CD4-positive, alpha-beta T cell (primary cell): ENCODE measurements at regions of chr20 and their contacts with region 1.

Region 1: DNA sequence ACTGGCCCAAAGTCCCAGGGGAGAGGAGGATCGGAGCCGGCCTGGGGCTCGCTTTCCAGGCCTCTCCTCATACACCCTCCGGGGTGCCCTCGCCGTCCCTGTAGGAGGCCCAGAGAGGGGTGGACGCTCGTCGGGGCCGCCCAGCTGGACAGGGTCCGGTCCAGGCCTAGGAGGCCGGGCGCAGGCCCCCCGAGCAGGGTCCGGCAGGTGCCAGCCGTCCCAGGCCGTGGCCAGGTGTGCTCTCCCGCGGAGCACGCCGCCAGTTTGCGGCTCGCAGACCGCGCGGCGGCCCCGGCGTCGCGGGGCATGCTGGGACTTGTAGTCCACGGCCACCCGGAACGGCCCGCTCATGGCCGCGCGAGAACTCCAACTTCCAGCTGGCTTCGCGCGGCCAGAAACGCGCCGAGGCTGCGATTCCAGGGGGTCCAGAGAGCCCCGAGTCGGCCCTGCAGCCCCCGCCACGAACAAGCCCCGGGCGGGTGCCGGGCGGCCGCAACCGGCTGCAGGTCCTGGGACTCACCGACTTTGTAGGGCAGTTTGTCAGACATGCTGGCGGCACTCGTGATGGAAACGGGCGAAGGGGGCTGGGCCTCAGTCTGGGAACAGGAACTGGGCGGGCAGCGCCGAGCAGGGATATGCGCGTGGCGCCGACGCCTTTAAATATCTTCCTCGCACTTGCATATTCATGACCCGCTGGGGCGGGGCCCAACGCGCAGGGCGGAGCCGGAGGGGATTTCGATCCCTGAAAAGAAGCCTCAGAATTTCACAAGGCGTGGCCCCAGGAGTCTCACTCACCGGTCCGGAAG is at the start of gene AHCY:
- DNase-seq: peak; percentile 78 to 96 (median 87)
- ATAC-seq: peak; percentile 94
- H3K4me3 ChIP-seq: peak within 1 kb of the TSS; percentile 82
- H3K4me3 Mint-ChIP-seq: peak within 1 kb of the TSS; percentile 98
- H3K27ac ChIP-seq: peak within 1 kb of the TSS; percentile 65 to 84
- H3K27ac Mint-ChIP-seq: peak within 1 kb of the TSS; percentile 91
- H3K4me1 ChIP-seq: peaks cover 17% of the 10 kb centered on the region
- H3K4me1 Mint-ChIP-seq: peaks cover 11% of the 10 kb centered on the region
- H3K27me3 ChIP-seq: no peaks in the 10 kb centered on the region
- H3K27me3 Mint-ChIP-seq: no peaks in the 10 kb centered on the region
- CTCF ChIP-seq: no peak
- total RNA-seq, gene AHCY: 16.7 to 16.9 TPM

Region 2: DNA sequence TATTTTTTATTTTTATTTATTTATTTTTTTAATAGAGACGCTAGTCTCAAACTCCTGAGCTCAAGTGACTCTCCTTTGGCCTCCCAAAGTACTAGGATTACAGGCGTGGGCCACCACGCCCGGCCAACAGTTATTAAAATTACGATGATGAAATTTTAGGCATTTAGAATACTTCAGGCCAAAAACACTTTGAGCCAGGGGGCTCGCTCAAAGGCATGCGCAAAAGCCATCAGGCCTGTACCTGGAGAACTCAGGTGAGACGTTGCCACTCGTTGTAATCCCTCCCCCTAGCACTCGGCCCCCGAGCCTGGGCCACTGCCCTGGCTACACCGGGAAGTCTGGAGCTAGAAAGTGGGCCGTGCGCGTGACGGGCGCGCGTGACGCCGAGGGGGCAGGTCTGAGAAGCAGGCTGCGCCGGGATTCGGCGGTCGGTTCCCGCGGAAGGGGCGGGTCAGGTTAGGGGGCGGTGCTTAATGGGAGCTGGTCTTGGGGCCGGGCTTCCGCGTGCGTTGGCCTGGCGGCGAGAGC is 813.4 kb before region 1 on chr20:
- CTCF ChIA-PET with region 1: no interaction called
- POLR2A ChIA-PET with region 1: no interaction called
- intact Hi-C with region 1: loop called in 1 of 2 experiments (anchors 10 kb)
- DNase-seq: peak; percentile 97 to 100 (median 99)
- ATAC-seq: peak; percentile 96
- H3K4me3 ChIP-seq: peak overlapping the region; percentile 57
- H3K4me3 Mint-ChIP-seq: peak overlapping the region; percentile 94
- H3K27ac ChIP-seq: peak overlapping the region; percentile 92 to 95
- H3K27ac Mint-ChIP-seq: peak overlapping the region; percentile 96
- H3K4me1 ChIP-seq: peaks cover 26% of the 10 kb centered on the region
- H3K4me1 Mint-ChIP-seq: peaks cover 36% of the 10 kb centered on the region
- H3K27me3 ChIP-seq: no peaks in the 10 kb centered on the region
- H3K27me3 Mint-ChIP-seq: no peaks in the 10 kb centered on the region
- CTCF ChIP-seq: no peak

Region 3: GRCh38 chr20:34285450-34285849 is 17.5 kb before region 1 on chr20:
- CTCF ChIA-PET with region 1: no interaction called
- POLR2A ChIA-PET with region 1: no interaction called
- intact Hi-C with region 1: no loop called
- DNase-seq: no peak
- ATAC-seq: no peak
- H3K4me3 ChIP-seq: no peak overlapping the region
- H3K4me3 Mint-ChIP-seq: no peak overlapping the region
- H3K27ac ChIP-seq: no peak overlapping the region
- H3K27ac Mint-ChIP-seq: no peak overlapping the region
- H3K4me1 ChIP-seq: no peaks in the 10 kb centered on the region
- H3K4me1 Mint-ChIP-seq: no peaks in the 10 kb centered on the region
- H3K27me3 ChIP-seq: no peaks in the 10 kb centered on the region
- H3K27me3 Mint-ChIP-seq: no peaks in the 10 kb centered on the region
- CTCF ChIP-seq: no peak

Region 4: GRCh38 chr20:34324541-34324940 is 21.6 kb after region 1 on chr20:
- CTCF ChIA-PET with region 1: no interaction called
- POLR2A ChIA-PET with region 1: no interaction called
- intact Hi-C with region 1: no loop called
- DNase-seq: peak in 1 of 14 experiments; percentile 7
- ATAC-seq: no peak
- H3K4me3 ChIP-seq: no peak overlapping the region
- H3K4me3 Mint-ChIP-seq: no peak overlapping the region
- H3K27ac ChIP-seq: no peak overlapping the region
- H3K27ac Mint-ChIP-seq: no peak overlapping the region
- H3K4me1 ChIP-seq: no peaks in the 10 kb centered on the region
- H3K4me1 Mint-ChIP-seq: no peaks in the 10 kb centered on the region
- H3K27me3 ChIP-seq: no peaks in the 10 kb centered on the region
- H3K27me3 Mint-ChIP-seq: peaks cover 15% of the 10 kb centered on the region
- CTCF ChIP-seq: no peak

Region 5: DNA sequence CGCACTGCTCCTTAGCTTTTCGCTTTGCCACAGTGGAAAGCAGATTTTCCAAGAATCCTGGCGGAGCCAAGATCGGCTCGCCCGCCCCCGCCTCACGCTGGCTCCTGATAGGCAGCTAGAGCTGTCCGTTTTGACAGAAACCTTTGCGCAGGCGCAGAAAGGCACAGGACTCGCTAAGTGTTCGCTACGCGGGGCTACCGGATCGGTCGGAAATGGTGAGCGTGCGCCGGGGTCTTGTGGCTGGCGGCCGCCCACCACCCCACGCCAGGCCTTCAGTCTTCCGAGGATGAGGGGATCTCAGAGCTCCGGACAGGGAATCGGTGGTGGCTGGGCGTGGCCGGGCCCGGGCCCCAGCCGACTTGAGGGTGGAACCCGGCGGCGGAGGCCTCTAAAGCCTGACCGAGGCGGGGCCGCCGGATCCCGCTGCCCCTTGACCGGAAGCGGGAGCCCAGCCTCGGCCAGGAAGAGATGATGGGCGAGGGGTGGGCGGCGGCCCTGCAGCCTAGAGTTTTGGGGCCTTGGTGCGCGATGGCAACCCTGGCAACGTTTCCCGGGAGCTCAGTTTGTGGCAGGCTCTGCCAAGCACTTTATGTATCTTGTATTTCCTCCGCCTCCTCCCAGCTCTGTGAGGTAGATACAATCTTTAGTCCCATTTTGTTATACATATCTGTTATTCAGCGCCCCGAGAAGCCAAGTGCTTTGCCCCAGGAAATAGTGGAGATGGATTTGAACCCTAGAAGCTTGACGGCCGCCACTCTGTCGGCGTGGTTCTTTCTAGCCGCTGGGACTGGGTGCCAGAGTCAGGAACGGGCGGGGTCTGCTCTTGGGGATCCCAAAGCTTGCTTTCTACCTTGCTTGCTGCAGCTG is 213.6 kb after region 1 on chr20 and contains the start of gene DYNLRB1:
- CTCF ChIA-PET with region 1: no interaction called
- POLR2A ChIA-PET with region 1: interaction called, 30 read pairs
- intact Hi-C with region 1: loop called in 1 of 2 experiments (anchors 1 kb)
- DNase-seq: peak; percentile 88 to 96 (median 94)
- ATAC-seq: peak; percentile 74
- H3K4me3 ChIP-seq: peak within 1 kb of the TSS; percentile 82
- H3K4me3 Mint-ChIP-seq: peak within 1 kb of the TSS; percentile 99
- H3K27ac ChIP-seq: peak within 1 kb of the TSS; percentile 60 to 80
- H3K27ac Mint-ChIP-seq: peak within 1 kb of the TSS; percentile 94
- H3K4me1 ChIP-seq: peaks cover 30% of the 10 kb centered on the region
- H3K4me1 Mint-ChIP-seq: peaks cover 70% of the 10 kb centered on the region
- H3K27me3 ChIP-seq: no peaks in the 10 kb centered on the region
- H3K27me3 Mint-ChIP-seq: no peaks in the 10 kb centered on the region
- CTCF ChIP-seq: no peak
- total RNA-seq, gene DYNLRB1: 38.3 to 40.3 TPM

Region 6: GRCh38 chr20:34704177-34705007 is 401.5 kb after region 1 on chr20 and contains the start of gene TP53INP2:
- CTCF ChIA-PET with region 1: no interaction called
- POLR2A ChIA-PET with region 1: no interaction called
- intact Hi-C with region 1: loop called in 1 of 2 experiments (anchors 2 kb)
- DNase-seq: peak; percentile 67 to 96 (median 84)
- ATAC-seq: peak; percentile 58
- H3K4me3 ChIP-seq: peak within 1 kb of the TSS; percentile 94
- H3K4me3 Mint-ChIP-seq: peak within 1 kb of the TSS; percentile 97
- H3K27ac ChIP-seq: peak within 1 kb of the TSS; percentile 59 to 69
- H3K27ac Mint-ChIP-seq: peak within 1 kb of the TSS; percentile 94
- H3K4me1 ChIP-seq: peaks cover 30% of the 10 kb centered on the region
- H3K4me1 Mint-ChIP-seq: peaks cover 36% of the 10 kb centered on the region
- H3K27me3 ChIP-seq: no peaks in the 10 kb centered on the region
- H3K27me3 Mint-ChIP-seq: peaks cover 13% of the 10 kb centered on the region
- CTCF ChIP-seq: no peak
- total RNA-seq, gene TP53INP2: 65.8 to 72.7 TPM

Region 7: GRCh38 chr20:34955232-34956040 is 652.5 kb after region 1 on chr20 and contains the starts of genes GSS and MYH7B:
- CTCF ChIA-PET with region 1: no interaction called
- POLR2A ChIA-PET with region 1: no interaction called
- intact Hi-C with region 1: loop called in 1 of 2 experiments (anchors 10 kb)
- DNase-seq: peak; percentile 90 to 98 (median 96)
- ATAC-seq: peak; percentile 92
- H3K4me3 ChIP-seq: peak within 1 kb of the TSS; percentile 87
- H3K4me3 Mint-ChIP-seq: peak within 1 kb of the TSS; percentile 94
- H3K27ac ChIP-seq: peak within 1 kb of the TSS; percentile 62 to 70
- H3K27ac Mint-ChIP-seq: peak within 1 kb of the TSS; percentile 91
- H3K4me1 ChIP-seq: peaks cover 19% of the 10 kb centered on the region
- H3K4me1 Mint-ChIP-seq: peaks cover 23% of the 10 kb centered on the region
- H3K27me3 ChIP-seq: no peaks in the 10 kb centered on the region
- H3K27me3 Mint-ChIP-seq: no peaks in the 10 kb centered on the region
- CTCF ChIP-seq: no peak
- total RNA-seq, gene GSS: 24.3 to 24.7 TPM
- total RNA-seq, gene MYH7B: 0.53 to 0.58 TPM

Region 8: GRCh38 chr20:35277531-35278395 is 974.8 kb after region 1 on chr20 and contains the start of gene MMP24OS:
- CTCF ChIA-PET with region 1: no interaction called
- POLR2A ChIA-PET with region 1: interaction called, 3 read pairs
- intact Hi-C with region 1: loop called in 1 of 2 experiments (anchors 5 kb)
- DNase-seq: peak; percentile 79 to 96 (median 86)
- ATAC-seq: peak; percentile 86
- H3K4me3 ChIP-seq: peak within 1 kb of the TSS; percentile 76
- H3K4me3 Mint-ChIP-seq: peak within 1 kb of the TSS; percentile 96
- H3K27ac ChIP-seq: peak within 1 kb of the TSS; percentile 93 to 95
- H3K27ac Mint-ChIP-seq: peak within 1 kb of the TSS; percentile 97
- H3K4me1 ChIP-seq: peaks cover 39% of the 10 kb centered on the region
- H3K4me1 Mint-ChIP-seq: peaks cover 35% of the 10 kb centered on the region
- H3K27me3 ChIP-seq: no peaks in the 10 kb centered on the region
- H3K27me3 Mint-ChIP-seq: no peaks in the 10 kb centered on the region
- CTCF ChIP-seq: peak; percentile 20
- total RNA-seq, gene MMP24OS: 71.8 to 74.8 TPM